ENCODE measurements at regions of chr19 and their contacts with region 1.

Region 1: GRCh38 chr19:4229179-4229931 is at the start of gene EBI3:
- DNase-seq: peak; percentile 88
- ATAC-seq: peak; percentile 86
- H3K4me3 Mint-ChIP-seq: no peak within 1 kb of the TSS
- H3K27ac Mint-ChIP-seq: peak within 1 kb of the TSS; percentile 86
- H3K4me1 Mint-ChIP-seq: peaks cover 9% of the 10 kb centered on the region
- H3K27me3 Mint-ChIP-seq: peaks cover 6% of the 10 kb centered on the region
- total RNA-seq, gene EBI3: 14.5 to 16.8 TPM

Region 2: GRCh38 chr19:4278419-4279266 is 49.3 kb after region 1 on chr19 and contains the start of gene SHD:
- CTCF ChIA-PET with region 1: no interaction called
- POLR2A ChIA-PET with region 1: no interaction called
- intact Hi-C with region 1: no loop called
- DNase-seq: no peak
- ATAC-seq: no peak
- H3K4me3 Mint-ChIP-seq: no peak within 1 kb of the TSS
- H3K27ac Mint-ChIP-seq: no peak within 1 kb of the TSS
- H3K4me1 Mint-ChIP-seq: peaks cover 2% of the 10 kb centered on the region
- H3K27me3 Mint-ChIP-seq: peaks cover 22% of the 10 kb centered on the region
- total RNA-seq, gene SHD: not detected

Region 3: GRCh38 chr19:4304530-4305252 is 75.3 kb after region 1 on chr19 and contains the start of gene FSD1:
- CTCF ChIA-PET with region 1: no interaction called
- POLR2A ChIA-PET with region 1: no interaction called
- intact Hi-C with region 1: loop called in 1 of 2 experiments (anchors 2 kb)
- DNase-seq: peak; percentile 90
- ATAC-seq: peak; percentile 82
- H3K4me3 Mint-ChIP-seq: peak within 1 kb of the TSS; percentile 66
- H3K27ac Mint-ChIP-seq: peak within 1 kb of the TSS; percentile 72
- H3K4me1 Mint-ChIP-seq: peaks cover 34% of the 10 kb centered on the region
- H3K27me3 Mint-ChIP-seq: no peaks in the 10 kb centered on the region
- total RNA-seq, gene FSD1: 23.1 to 25.3 TPM

Measured in activated CD4-positive, alpha-beta T cell treated with anti-CD3 and anti-CD28 coated beads for 36 hours (primary cell).